Head of caudate nucleus (tissue), 42 donors: ENCODE measurements at regions of chr12 and their contacts with region 1.

Region 1: DNA sequence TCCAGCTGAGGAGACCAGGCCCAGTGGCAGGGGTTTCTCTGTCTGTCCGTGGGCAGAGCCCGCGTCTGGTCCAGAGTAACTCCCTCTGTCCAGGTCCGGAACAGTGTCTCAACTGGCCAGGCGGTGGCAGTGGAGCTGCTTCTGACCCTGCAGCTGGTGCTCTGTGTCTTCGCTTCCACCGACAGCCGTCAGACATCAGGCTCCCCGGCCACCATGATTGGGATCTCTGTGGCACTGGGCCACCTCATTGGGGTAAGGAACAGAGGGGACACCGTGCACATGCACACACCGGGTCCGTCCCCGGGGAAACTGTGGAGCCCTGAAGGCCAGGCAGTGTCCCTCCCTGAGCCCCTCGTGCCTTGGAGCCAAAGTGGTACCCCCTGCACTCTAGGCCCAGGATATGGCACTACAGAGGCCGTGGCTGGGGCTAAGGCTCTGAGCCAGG is 1.5 kb downstream of the AQP6 start:
- DNase-seq: peak; percentile 58 to 95 (median 88)

Region 2: GRCh38 chr12:50025187-50026059 is 51.2 kb after region 1 on chr12 and contains the start of gene RACGAP1:
- intact Hi-C with region 1: loop called (anchors 10 kb)
- DNase-seq: peak; percentile 89 to 98 (median 94)

Region 3: DNA sequence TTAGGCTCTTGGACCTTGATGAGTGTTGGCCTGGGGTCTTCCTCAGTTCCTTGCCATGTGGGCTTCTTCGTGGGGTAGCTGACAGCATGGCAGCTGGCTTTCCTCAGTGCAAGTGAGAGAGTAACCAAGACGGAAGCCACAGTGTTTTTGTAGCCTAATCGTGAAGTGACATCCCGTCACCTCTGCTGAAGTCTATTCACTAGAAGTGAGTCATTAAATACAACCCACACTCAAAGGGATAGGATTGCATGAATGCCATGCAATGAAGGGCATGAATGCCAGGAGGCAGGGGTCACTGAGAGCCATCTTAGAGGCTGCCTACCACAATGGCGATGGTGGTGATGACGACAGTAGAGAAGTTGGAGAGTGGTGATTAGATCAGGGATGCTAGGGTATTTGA is 69.6 kb after region 1 on chr12:
- intact Hi-C with region 1: no loop called
- DNase-seq: peak in 2 of 42 donors; percentile 11 to 13

Region 4: GRCh38 chr12:50055831-50056638 is 81.8 kb after region 1 on chr12:
- intact Hi-C with region 1: loop called (anchors 2 kb)
- DNase-seq: peak; percentile 56 to 94 (median 80)